Prostate gland (tissue), 2 donors: ENCODE measurements at regions of chr4 and their contacts with region 1.

Region 1: GRCh38 chr4:70651864-70652506 is 14.3 kb downstream of the JCHAIN start:
- DNase-seq: no peak
- H3K4me3 ChIP-seq: no peak overlapping the region
- H3K27ac ChIP-seq: no peak overlapping the region
- H3K4me1 ChIP-seq: no peaks in the 10 kb centered on the region
- H3K27me3 ChIP-seq: no peaks in the 10 kb centered on the region
- CTCF ChIP-seq: peak in 3 of 4 experiments; percentile 48 to 65 (median 53)
- POLR2A ChIP-seq: no peak

Region 2: DNA sequence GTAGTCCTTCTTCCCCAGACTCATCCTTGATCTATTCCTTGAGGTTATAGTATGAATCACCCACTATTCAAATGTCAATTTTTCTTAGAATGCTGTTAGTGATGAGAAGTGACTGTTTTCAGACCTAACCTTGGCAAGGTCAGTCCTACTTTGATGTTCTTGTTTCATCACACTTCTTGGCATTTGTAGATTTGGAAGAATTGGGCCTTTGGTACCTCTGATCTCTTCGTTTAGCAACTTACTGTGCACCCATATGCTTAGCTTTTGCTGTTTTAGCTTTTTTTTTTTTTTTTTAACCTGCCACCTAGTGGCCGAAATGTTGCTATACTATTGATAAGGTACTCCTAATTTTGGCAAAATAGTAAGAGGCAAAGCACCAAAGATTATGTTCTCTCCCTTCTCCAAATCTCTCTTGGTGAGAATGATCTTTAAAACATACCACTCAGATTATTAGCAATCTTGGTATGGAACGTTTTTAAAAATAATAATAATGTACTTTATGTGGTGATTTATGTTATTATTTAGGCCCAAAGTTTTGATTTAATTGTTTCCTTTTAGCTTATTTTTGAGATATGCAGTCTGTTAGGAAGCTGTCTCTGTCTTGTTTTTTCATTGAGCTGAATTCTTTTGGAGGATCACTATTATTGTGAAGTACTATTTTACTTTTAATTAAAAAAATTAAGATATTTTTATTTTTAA is 358.1 kb after region 1 on chr4:
- intact Hi-C with region 1: loop called (anchors 5 kb)
- DNase-seq: no peak
- H3K4me3 ChIP-seq: no peak overlapping the region
- H3K27ac ChIP-seq: no peak overlapping the region
- H3K4me1 ChIP-seq: no peaks in the 10 kb centered on the region
- H3K27me3 ChIP-seq: no peaks in the 10 kb centered on the region
- CTCF ChIP-seq: peak; percentile 46 to 70 (median 64)
- POLR2A ChIP-seq: no peak